GM12878 (cell line): ENCODE measurements at regions of chr5 and their contacts with region 1.

Region 1: DNA sequence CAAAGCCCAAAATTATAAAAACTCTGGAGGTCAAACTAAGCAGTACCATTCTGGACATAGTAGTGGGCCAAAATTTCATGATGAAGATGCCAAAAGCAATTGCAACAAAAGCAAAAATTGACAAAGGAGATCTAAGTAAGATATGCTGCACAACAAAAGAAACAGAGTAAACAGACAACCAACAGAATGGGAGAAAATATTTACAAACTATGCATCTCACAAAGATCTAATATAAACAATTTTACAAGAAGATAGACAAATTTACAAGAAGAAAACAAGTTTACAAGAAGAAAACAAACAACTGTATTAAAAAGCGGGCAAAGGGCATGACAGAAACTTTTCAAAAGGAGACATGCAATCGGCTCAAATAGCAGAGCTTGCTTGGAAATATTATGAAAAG is 396.9 kb downstream of the CDH9 start:
- DNase-seq: no peak
- ATAC-seq: no peak
- H3K4me3 ChIP-seq: no peak overlapping the region
- H3K27ac ChIP-seq: no peak overlapping the region
- H3K4me1 ChIP-seq: no peaks in the 10 kb centered on the region
- H3K27me3 ChIP-seq: no peaks in the 10 kb centered on the region
- CTCF ChIP-seq: no peak
- EP300 ChIP-seq: no peak
- POLR2A ChIP-seq: no peak
- RAD21 ChIP-seq: no peak

Region 2: GRCh38 chr5:26622947-26623346 is 18.5 kb before region 1 on chr5:
- CTCF ChIA-PET with region 1: interaction called, 4 read pairs
- POLR2A ChIA-PET with region 1: interaction called, 3 read pairs
- RAD21 ChIA-PET with region 1: interaction called, 10 read pairs
- SMC1A ChIA-PET with region 1: interaction called, 5 read pairs
- in situ Hi-C with region 1: no loop called
- intact Hi-C with region 1: no loop called
- DNase-seq: no peak
- ATAC-seq: peak; percentile 50
- H3K4me3 ChIP-seq: no peak overlapping the region
- H3K27ac ChIP-seq: no peak overlapping the region
- H3K4me1 ChIP-seq: no peaks in the 10 kb centered on the region
- H3K27me3 ChIP-seq: no peaks in the 10 kb centered on the region
- CTCF ChIP-seq: no peak
- EP300 ChIP-seq: no peak
- POLR2A ChIP-seq: no peak
- RAD21 ChIP-seq: no peak